ENCODE measurements at regions of chr1 and their contacts with region 1.

Region 1: GRCh38 chr1:34859446-34860200 is at the start of gene SMIM12:
- DNase-seq: peak; percentile 92 to 98
- H3K4me3 ChIP-seq: peak within 1 kb of the TSS; percentile 92
- CTCF ChIP-seq: peak in 1 of 3 donors; percentile 72
- POLR2A ChIP-seq: no peak
- total RNA-seq, gene SMIM12: 22.7 to 28.8 (median 25.7) TPM

Region 2: GRCh38 chr1:35030756-35031446 is 171.3 kb after region 1 on chr1:
- intact Hi-C with region 1: loop called (anchors 5 kb)
- DNase-seq: peak in 1 of 2 donors; percentile 85
- H3K4me3 ChIP-seq: peak overlapping the region; percentile 61
- CTCF ChIP-seq: no peak
- POLR2A ChIP-seq: no peak